B cell (primary cell): ENCODE measurements at regions of chr7 and their contacts with region 1.

Region 1: DNA sequence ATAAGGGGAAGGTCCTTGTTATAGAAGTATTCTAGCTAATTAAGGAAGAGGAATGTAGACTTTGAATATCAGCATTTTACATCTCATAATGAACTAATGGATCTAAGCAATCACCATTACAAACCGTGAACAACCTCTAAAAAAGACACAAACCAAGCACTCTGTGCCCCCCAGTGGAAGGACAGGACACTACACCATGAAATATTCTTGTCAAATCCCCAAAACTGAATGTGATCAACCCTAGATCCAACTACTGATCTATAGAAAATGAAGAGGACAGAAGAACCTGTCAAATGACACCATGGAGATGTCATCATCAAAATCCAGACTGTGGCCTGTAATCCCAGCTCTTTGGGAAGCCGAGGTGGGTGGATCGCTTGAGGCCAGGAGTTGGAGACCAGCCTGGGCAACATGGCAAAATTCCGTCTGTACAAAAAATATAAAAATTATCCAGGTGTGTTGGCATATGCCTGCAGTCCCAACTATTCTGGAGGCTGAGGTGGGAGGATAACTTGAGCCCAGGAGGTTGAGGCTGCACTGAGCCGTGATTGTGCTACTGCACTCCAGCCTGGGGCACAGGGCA is 111.3 kb upstream of the CARD11 start:
- DNase-seq: peak; percentile 78
- ATAC-seq: peak; percentile 72
- H3K4me3 ChIP-seq: no peak overlapping the region
- H3K4me3 Mint-ChIP-seq: no peak overlapping the region
- H3K27ac ChIP-seq: no peak overlapping the region
- H3K27ac Mint-ChIP-seq: no peak overlapping the region
- H3K4me1 ChIP-seq: peaks cover 22 to 30% of the 10 kb centered on the region in 2 donors
- H3K4me1 Mint-ChIP-seq: peaks cover 33% of the 10 kb centered on the region
- H3K27me3 ChIP-seq: no peaks in the 10 kb centered on the region
- H3K27me3 Mint-ChIP-seq: peaks cover 8% of the 10 kb centered on the region
- CTCF ChIP-seq: peak; percentile 88

Region 2: DNA sequence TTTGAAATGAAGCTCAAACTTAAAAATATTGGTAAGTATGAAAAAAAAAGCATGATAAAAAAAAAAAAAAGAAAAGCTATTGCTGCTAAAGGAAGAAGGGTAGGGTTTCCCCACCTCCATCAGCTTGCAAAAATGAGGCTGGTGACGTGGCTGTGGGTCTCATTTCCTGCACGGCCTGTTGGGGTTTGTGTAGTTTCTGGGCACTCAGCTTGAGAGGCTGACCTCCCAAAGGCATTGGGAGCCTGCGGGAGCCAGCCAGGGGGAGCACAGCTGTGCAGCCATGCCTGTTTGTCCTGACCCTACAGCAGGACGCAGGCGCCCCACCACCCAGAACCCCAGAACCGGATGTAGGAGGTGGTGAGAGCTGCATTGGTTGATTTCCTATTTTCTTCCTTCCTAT is 62.5 kb before region 1 on chr7:
- CTCF ChIA-PET with region 1: interaction called, 8 read pairs
- POLR2A ChIA-PET with region 1: no interaction called
- intact Hi-C with region 1: loop called (anchors 10 kb)
- DNase-seq: peak; percentile 83
- ATAC-seq: peak; percentile 86
- H3K4me3 ChIP-seq: peak overlapping the region in 1 of 5 experiments; percentile 20
- H3K4me3 Mint-ChIP-seq: peak overlapping the region; percentile 38
- H3K27ac ChIP-seq: peak overlapping the region; percentile 54 to 76
- H3K27ac Mint-ChIP-seq: peak overlapping the region; percentile 85
- H3K4me1 ChIP-seq: peaks cover 37 to 50% of the 10 kb centered on the region in 2 donors
- H3K4me1 Mint-ChIP-seq: peaks cover 45% of the 10 kb centered on the region
- H3K27me3 ChIP-seq: no peaks in the 10 kb centered on the region
- H3K27me3 Mint-ChIP-seq: no peaks in the 10 kb centered on the region
- CTCF ChIP-seq: no peak

Region 3: DNA sequence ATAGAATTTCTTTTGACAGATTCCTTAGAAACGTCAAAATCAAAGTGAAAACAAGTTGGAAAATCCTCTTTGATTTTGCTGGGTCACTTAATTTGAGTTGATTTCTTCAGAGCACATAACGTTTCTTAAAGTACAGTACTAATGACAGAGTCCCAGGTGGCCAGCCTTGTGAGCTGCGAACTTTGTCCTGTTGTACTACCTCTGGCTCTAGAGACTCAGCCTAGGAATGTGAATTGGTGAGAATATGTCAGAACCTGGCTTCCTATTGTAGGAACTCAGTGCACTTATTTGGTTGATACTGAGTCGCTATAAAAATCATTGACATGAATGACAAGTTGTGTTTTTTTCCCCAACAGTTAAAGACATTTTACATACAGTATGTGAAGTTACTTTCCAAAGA is 166.2 kb after region 1 on chr7:
- CTCF ChIA-PET with region 1: no interaction called
- POLR2A ChIA-PET with region 1: no interaction called
- intact Hi-C with region 1: no loop called
- DNase-seq: no peak
- ATAC-seq: no peak
- H3K4me3 ChIP-seq: no peak overlapping the region
- H3K4me3 Mint-ChIP-seq: no peak overlapping the region
- H3K27ac ChIP-seq: no peak overlapping the region
- H3K27ac Mint-ChIP-seq: no peak overlapping the region
- H3K4me1 ChIP-seq: no peaks in the 10 kb centered on the region
- H3K4me1 Mint-ChIP-seq: no peaks in the 10 kb centered on the region
- H3K27me3 ChIP-seq: peaks cover 0 to 6% (median 3%) of the 10 kb centered on the region in 4 experiments
- H3K27me3 Mint-ChIP-seq: peaks cover 17% of the 10 kb centered on the region
- CTCF ChIP-seq: no peak